ENCODE measurements at regions of chr10 and their contacts with region 1.

Region 1: GRCh38 chr10:71893920-71894319 is 42.9 kb upstream of the PSAP start:
- H3K4me3 ChIP-seq: no peak overlapping the region
- H3K27ac ChIP-seq: no peak overlapping the region
- H3K4me1 ChIP-seq: no peaks in the 10 kb centered on the region
- CTCF ChIP-seq: no peak

Region 2: DNA sequence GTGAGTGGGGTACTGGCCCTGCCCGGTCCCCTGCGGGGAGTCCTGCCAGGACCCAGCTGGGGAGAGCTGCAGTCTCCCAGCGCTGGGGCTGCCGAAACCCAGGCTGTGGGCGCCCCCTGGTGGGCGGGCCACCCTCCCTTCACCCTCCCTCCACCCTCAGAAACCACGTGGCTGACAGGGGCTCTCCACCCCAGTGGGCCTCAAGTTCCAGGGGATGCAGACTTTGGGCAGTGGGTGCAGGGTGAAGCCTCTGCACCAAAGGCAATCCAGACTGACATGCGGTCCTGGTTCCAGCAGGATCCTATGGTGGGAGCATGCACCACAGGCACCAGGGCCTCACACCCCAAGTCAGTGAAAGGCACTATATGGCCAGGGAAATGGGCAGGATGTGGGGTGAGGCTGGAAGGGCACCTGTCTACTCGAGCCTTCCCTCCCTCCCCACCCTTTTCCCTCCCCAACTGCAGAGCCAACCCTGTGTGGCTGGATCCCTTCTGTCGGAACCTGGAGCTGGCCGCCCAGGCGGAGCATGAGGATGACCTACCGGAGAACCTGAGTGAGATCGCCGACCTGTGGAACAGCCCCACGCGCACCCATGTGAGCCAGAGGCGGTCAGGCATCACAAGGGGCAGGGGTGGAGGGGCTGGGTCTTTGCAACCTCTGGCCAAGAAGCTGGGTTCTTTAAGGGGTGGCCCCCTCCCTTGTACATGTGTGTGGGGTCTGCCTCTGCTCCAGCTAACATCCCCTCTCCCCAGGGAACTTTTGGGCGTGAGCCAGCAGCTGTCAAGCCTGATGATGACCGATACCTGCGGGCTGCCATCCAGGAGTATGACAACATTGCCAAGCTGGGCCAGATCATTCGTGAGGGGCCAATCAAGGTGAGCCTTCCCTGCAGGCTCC is 81.7 kb before region 1 on chr10:
- CTCF ChIA-PET with region 1: interaction called, 10 read pairs
- POLR2A ChIA-PET with region 1: no interaction called
- H3K4me3 ChIP-seq: no peak overlapping the region
- H3K27ac ChIP-seq: 0 out of 2 replicates have a peak overlapping the region, but pooled peaks have one; percentile 9
- H3K4me1 ChIP-seq: peaks cover 6% of the 10 kb centered on the region; the same call in 1 of the 2 replicates
- CTCF ChIP-seq: peak; percentile 94

Region 3: GRCh38 chr10:71835671-71836595 is 58.0 kb before region 1 on chr10:
- CTCF ChIA-PET with region 1: interaction called, 62 read pairs
- POLR2A ChIA-PET with region 1: interaction called, 5 read pairs
- H3K4me3 ChIP-seq: no peak overlapping the region
- H3K27ac ChIP-seq: peak overlapping the region; percentile 71
- H3K4me1 ChIP-seq: peaks cover 44% of the 10 kb centered on the region
- CTCF ChIP-seq: no peak

Region 4: DNA sequence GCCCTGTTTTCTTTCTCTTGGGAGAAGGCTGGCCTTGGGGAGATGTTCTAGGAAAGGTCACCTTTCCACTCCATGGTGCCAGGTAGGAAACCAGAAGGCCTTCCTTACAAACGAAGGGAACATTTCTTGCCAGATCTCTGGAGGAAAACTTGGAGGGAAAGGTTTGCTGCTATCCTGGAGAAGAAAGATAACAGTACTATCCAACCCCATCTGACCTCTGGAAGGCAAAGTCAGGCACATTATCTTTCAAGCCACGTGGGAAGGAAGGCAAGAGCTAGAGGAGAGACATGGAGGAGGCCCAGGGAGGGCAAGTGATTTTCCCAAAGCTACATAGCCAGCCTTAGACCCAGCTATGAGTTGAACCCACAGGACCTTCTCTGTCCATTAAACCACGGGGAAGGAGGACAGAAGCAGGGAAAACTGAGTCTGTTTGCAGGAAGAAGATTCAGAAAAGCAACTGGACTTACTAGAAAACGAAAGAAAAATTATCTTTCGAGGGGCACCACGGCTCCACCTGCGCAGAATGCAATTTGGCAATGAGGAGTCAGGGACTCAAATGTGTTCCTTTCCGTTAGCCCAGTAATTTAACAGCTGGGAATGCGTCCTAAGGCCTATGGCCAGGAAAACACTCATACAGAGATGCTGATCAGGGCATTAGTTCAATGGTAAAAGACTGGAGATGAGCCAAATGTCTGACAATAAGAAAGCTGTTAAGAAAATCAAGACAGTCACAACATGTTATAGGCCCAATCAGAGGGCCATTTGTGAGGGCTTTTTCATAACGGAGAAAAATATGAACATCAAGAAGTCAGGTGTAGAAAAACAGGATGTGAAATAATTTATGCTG is 10.9 kb before region 1 on chr10:
- CTCF ChIA-PET with region 1: interaction called, 17 read pairs
- POLR2A ChIA-PET with region 1: interaction called, 3 read pairs
- H3K4me3 ChIP-seq: no peak overlapping the region
- H3K27ac ChIP-seq: no peak overlapping the region
- H3K4me1 ChIP-seq: no peaks in the 10 kb centered on the region
- CTCF ChIP-seq: no peak

Region 5: DNA sequence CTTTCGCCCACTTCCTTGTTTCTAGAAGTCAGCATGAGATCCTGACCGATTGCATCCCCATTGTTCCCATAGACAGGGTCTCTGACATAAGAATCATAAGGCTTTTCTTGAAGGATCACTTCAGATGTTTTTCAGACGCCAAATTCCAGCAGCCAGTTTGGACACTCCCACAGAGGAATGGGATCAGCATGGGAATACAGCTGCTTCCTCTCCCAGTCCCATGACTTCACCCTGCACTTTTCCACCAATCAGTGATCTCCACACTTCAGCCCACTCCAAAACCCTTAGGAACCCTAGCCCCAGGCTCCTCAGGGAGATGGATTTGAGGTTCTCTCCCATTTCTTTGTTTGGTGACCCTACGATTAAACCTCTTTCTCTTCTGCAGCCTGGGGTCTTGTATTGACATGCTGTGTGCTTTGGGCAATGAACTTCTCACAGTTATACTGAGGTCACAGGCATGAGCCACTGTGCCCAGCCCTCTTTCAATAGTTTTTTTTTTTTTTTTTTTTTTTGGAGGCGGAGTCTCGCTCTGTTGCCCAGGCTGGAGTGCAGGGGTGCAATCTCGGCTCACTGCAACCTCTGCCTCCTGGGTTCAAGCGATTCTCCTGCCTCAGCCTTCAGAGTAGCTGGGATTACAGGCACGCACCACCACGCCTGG is 17.5 kb after region 1 on chr10:
- CTCF ChIA-PET with region 1: interaction called, 26 read pairs
- POLR2A ChIA-PET with region 1: no interaction called
- H3K4me3 ChIP-seq: no peak overlapping the region
- H3K27ac ChIP-seq: no peak overlapping the region
- H3K4me1 ChIP-seq: no peaks in the 10 kb centered on the region
- CTCF ChIP-seq: no peak

Region 6: DNA sequence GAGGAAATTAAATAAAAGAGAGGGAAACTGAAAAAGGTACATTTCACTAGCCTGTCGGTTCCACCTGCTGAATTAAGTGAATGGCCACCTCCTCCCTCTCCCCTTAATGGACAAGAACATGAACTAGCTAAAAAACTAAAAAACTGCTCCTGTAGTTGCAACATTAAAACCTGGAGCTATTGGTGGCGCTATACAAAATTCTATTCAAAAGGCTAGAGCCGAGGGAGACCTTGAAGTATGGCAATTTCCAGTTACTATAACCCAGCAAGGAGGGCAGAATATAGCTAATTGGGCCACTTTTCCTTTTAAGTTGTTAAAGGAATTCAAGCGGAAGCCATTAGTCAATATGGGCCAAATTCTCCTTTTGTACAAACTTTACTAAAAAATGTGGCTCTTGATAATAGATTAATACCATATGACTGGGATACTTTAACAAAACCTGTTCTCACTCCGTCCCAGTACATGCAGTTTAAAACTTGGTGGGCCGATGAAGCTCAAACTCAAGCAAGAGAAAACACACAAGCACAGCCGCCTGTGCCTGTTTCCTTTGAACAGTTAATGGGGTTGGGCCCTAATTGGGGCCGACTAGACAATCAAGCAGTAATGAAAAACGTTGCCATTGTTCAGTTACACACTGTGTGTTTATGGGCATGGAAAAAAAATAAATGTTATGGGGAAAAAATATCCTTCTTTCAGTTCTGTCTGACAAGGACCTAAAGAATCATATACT is 63.8 kb after region 1 on chr10:
- CTCF ChIA-PET with region 1: interaction called, 25 read pairs
- POLR2A ChIA-PET with region 1: no interaction called
- H3K4me3 ChIP-seq: no peak overlapping the region
- H3K27ac ChIP-seq: no peak overlapping the region
- H3K4me1 ChIP-seq: no peaks in the 10 kb centered on the region
- CTCF ChIP-seq: no peak

Region 7: GRCh38 chr10:72016608-72017312 is 122.8 kb after region 1 on chr10:
- CTCF ChIA-PET with region 1: no interaction called
- POLR2A ChIA-PET with region 1: no interaction called
- H3K4me3 ChIP-seq: no peak overlapping the region
- H3K27ac ChIP-seq: no peak overlapping the region
- H3K4me1 ChIP-seq: peaks cover 4% of the 10 kb centered on the region
- CTCF ChIP-seq: no peak

Region 8: DNA sequence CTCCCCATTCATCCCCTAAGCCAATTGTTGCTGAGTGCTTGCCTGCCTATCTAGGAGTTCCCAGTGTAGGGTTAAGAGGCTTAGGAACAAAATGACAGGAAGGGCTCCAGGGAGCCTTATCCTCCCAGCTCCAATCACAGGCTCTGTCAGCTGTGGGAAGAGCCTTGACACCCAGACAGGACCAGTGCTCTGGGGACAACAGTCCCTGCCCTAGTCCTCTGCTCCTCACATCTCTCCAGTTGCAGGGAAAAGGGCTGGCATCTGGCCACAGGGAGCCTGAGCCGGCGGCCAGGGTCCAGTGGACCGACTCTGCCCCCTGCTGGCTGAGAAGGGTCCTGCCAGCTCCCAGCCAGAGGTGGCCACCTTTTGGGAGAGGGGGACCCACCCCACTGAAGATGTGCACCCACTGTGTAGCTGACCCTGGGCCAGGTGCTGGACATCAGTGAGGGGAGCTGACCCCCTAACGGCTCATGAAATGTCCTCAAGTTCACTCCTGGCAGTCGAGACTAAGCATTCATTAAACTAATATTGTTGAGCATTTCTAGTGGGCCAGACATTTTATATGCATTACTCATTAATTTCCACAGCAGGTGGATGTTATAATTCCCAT is 443.2 kb after region 1 on chr10:
- CTCF ChIA-PET with region 1: interaction called, 12 read pairs
- POLR2A ChIA-PET with region 1: no interaction called
- H3K4me3 ChIP-seq: no peak overlapping the region
- H3K27ac ChIP-seq: no peak overlapping the region
- H3K4me1 ChIP-seq: peaks cover 14% of the 10 kb centered on the region
- CTCF ChIP-seq: peak; percentile 94

Measured in HEK293 (cell line).